Activated B cell treated with CpG ODN at 0.5 μM for 24 hours (primary cell): ENCODE measurements at regions of chr3 and their contacts with region 1.

Region 1: GRCh38 chr3:122092460-122093165 is 37.5 kb downstream of the CD86 start:
- DNase-seq: no peak
- ATAC-seq: peak; percentile 50
- H3K4me3 Mint-ChIP-seq: peak overlapping the region; percentile 46
- H3K27ac Mint-ChIP-seq: peak overlapping the region; percentile 81
- H3K4me1 Mint-ChIP-seq: peaks cover 40% of the 10 kb centered on the region
- H3K27me3 Mint-ChIP-seq: no peaks in the 10 kb centered on the region
- CTCF ChIP-seq: no peak

Region 2: DNA sequence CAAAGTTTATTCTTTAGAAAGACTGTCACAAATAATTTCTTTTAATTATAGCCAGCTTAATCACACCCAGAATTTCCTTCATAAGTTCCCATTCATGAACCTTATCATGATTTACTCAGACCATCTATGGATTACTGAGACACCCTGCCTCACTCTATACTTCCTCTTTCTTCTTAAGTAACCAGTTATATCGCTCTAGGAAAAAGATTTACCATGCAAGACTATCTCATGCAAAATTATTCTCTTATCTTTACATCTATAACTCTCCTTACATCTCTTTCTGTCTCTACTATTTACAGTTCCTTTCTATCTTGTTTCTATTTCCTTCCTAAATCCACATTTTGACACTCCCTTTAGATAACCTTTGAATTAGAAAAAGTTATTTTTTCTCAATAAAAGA is 863.6 kb before region 1 on chr3:
- CTCF ChIA-PET with region 1: no interaction called
- POLR2A ChIA-PET with region 1: no interaction called
- intact Hi-C with region 1: no loop called
- DNase-seq: no peak
- ATAC-seq: no peak
- H3K4me3 Mint-ChIP-seq: no peak overlapping the region
- H3K27ac Mint-ChIP-seq: no peak overlapping the region
- H3K4me1 Mint-ChIP-seq: no peaks in the 10 kb centered on the region
- H3K27me3 Mint-ChIP-seq: no peaks in the 10 kb centered on the region
- CTCF ChIP-seq: no peak

Region 3: GRCh38 chr3:121855555-121855954 is 237.1 kb before region 1 on chr3:
- CTCF ChIA-PET with region 1: no interaction called
- POLR2A ChIA-PET with region 1: no interaction called
- intact Hi-C with region 1: loop called (anchors 5 kb)
- DNase-seq: no peak
- ATAC-seq: peak; percentile 42
- H3K4me3 Mint-ChIP-seq: no peak overlapping the region
- H3K27ac Mint-ChIP-seq: no peak overlapping the region
- H3K4me1 Mint-ChIP-seq: peaks cover 32% of the 10 kb centered on the region
- H3K27me3 Mint-ChIP-seq: no peaks in the 10 kb centered on the region
- CTCF ChIP-seq: no peak

Region 4: GRCh38 chr3:121883507-121883906 is 209.1 kb before region 1 on chr3:
- CTCF ChIA-PET with region 1: interaction called, 3 read pairs
- POLR2A ChIA-PET with region 1: no interaction called
- intact Hi-C with region 1: loop called (anchors 1 kb)
- DNase-seq: no peak
- ATAC-seq: peak; percentile 42
- H3K4me3 Mint-ChIP-seq: no peak overlapping the region
- H3K27ac Mint-ChIP-seq: no peak overlapping the region
- H3K4me1 Mint-ChIP-seq: peaks cover 12% of the 10 kb centered on the region
- H3K27me3 Mint-ChIP-seq: no peaks in the 10 kb centered on the region
- CTCF ChIP-seq: no peak

Region 5: DNA sequence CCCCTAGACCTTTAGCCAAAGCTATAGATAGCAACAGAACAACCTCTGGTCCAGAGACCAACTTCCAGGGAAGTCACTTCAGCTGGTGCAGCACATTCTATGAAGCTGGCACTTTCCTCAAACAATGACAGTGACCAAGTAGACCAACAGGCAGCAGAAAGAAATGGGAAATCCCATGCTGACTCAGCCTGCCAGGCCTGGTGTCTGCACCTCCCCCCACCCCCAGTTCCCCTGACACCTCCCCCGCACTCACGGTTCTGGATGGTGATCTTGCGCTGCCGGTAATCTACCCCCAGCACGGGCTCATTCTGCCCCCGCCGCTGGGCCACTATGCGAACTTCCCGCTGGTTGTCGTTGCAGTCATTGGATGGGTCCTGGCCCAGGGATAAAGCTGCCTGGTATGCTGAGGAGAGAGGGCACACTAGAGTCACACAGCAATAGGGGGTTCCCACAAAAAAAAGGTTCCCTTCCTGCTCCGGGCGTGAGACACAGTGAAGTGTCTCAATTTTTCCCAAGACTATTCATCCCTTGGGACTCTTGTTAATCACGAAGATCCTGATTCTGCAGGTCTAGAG is 87.5 kb before region 1 on chr3:
- CTCF ChIA-PET with region 1: no interaction called
- POLR2A ChIA-PET with region 1: interaction called, 3 read pairs
- intact Hi-C with region 1: loop called (anchors 2 kb)
- DNase-seq: peak; percentile 49
- ATAC-seq: peak; percentile 76
- H3K4me3 Mint-ChIP-seq: peak overlapping the region; percentile 76
- H3K27ac Mint-ChIP-seq: peak overlapping the region; percentile 91
- H3K4me1 Mint-ChIP-seq: peaks cover 65% of the 10 kb centered on the region
- H3K27me3 Mint-ChIP-seq: no peaks in the 10 kb centered on the region
- CTCF ChIP-seq: no peak

Region 6: GRCh38 chr3:122074621-122075265 is 17.9 kb before region 1 on chr3:
- CTCF ChIA-PET with region 1: no interaction called
- POLR2A ChIA-PET with region 1: interaction called, 13 read pairs
- intact Hi-C with region 1: no loop called
- DNase-seq: peak; percentile 32
- ATAC-seq: peak; percentile 18
- H3K4me3 Mint-ChIP-seq: peak overlapping the region; percentile 62
- H3K27ac Mint-ChIP-seq: peak overlapping the region; percentile 89
- H3K4me1 Mint-ChIP-seq: peaks cover 74% of the 10 kb centered on the region
- H3K27me3 Mint-ChIP-seq: no peaks in the 10 kb centered on the region
- CTCF ChIP-seq: no peak

Region 7: DNA sequence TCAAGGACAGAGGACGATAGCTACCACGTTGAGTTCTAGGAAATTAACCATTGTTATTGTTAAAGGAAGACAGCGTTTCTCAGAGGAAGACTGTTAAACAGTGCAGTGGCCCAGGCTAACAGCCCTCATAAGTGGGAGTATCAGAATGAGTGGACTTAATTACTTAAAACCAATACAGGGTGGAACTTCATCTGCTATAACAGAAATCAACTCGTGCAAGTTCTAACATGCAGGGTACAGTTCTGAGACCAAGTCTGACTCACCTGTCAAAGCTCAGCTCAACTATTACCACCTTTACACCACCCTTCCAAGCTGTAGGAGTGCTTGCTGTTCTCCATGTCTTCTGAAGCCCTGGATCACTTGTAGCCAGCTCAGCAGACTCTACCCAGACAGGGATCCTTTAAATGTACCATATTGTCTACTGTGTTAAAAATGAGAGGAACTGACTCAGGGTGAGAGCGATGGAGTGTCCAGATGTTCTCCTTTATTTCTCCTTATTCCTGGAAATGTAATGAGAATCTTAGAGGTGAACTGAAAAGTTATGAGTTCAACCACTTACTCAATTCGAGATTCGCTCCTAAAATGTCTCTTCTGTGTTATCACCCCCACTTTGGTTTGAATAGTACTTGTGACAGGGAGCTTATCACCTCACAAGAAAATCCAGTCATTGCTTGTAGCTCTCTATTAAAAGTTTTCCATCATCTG is 10.9 kb before region 1 on chr3:
- CTCF ChIA-PET with region 1: no interaction called
- POLR2A ChIA-PET with region 1: interaction called, 13 read pairs
- intact Hi-C with region 1: loop called (anchors 1 kb)
- DNase-seq: no peak
- ATAC-seq: no peak
- H3K4me3 Mint-ChIP-seq: no peak overlapping the region
- H3K27ac Mint-ChIP-seq: no peak overlapping the region
- H3K4me1 Mint-ChIP-seq: peaks cover 91% of the 10 kb centered on the region
- H3K27me3 Mint-ChIP-seq: no peaks in the 10 kb centered on the region
- CTCF ChIP-seq: no peak